Caco-2 (cell line): ENCODE measurements at regions of chr9 and their contacts with region 1.

Region 1: DNA sequence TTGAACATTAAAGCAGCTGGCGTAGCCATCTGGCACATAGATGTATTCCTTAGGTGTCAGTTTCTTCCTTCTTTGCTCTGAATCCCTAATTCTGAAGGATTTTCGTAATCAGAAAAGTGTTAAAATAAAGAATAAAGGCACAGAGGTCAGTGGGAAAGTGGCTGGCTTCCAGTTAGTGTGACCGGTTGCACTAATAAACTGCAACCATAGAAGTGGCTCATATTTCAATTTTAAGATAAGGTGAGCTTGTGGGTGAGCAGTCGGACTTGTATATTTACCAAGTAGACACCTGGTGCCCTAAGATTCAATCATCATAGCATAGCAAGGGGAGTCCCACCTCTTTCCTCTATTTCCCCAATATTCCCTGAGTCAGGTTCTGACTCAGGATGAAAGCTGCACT is 459.6 kb downstream of the ACTL7B start:
- DNase-seq: no peak
- H3K4me3 ChIP-seq: no peak overlapping the region
- H3K4me3 Mint-ChIP-seq: no peak overlapping the region
- H3K27ac Mint-ChIP-seq: no peak overlapping the region
- H3K4me1 ChIP-seq: no peaks in the 10 kb centered on the region
- H3K4me1 Mint-ChIP-seq: no peaks in the 10 kb centered on the region
- H3K27me3 ChIP-seq: no peaks in the 10 kb centered on the region
- H3K27me3 Mint-ChIP-seq: no peaks in the 10 kb centered on the region
- CTCF ChIP-seq: no peak

Region 2: DNA sequence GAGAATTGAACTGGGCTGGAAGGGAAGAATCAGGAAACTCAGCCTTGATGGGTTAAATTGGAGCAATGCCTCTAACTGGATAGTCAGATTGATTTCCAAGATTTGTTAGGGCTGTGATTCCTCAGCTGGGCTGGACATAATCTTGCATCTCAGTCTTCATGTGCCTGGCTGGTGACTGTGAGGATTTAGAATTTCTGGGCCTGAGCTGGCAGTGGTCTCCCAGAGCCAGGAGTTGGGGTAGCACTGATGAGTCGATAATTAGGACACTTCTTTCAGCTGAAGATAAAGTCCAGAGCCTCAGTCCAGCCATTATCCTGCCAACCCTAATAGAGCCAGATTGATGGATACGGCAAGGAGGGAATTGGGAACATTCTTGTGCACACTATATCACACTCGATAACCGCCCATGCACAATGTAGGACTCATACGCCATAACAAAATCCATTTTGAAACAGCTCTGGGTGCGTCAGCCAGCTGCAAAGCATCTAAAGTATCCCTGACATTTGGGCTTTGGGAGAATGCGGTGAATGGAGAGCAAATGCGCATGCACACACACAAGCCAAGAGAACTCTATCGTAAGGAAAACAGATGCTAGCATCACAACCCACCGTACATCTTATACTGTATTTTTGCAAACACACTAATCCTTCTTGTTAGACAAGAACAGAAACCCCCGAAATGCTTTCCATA is 501.5 kb before region 1 on chr9:
- CTCF ChIA-PET with region 1: no interaction called
- POLR2A ChIA-PET with region 1: no interaction called
- intact Hi-C with region 1: no loop called
- DNase-seq: no peak
- H3K4me3 ChIP-seq: no peak overlapping the region
- H3K4me3 Mint-ChIP-seq: no peak overlapping the region
- H3K27ac Mint-ChIP-seq: no peak overlapping the region
- H3K4me1 ChIP-seq: no peaks in the 10 kb centered on the region
- H3K4me1 Mint-ChIP-seq: peaks cover 6% of the 10 kb centered on the region
- H3K27me3 ChIP-seq: no peaks in the 10 kb centered on the region
- H3K27me3 Mint-ChIP-seq: no peaks in the 10 kb centered on the region
- CTCF ChIP-seq: no peak

Region 3: GRCh38 chr9:108333530-108333983 is 62.6 kb before region 1 on chr9:
- CTCF ChIA-PET with region 1: no interaction called
- POLR2A ChIA-PET with region 1: no interaction called
- intact Hi-C with region 1: loop called (anchors 10 kb)
- DNase-seq: no peak
- H3K4me3 ChIP-seq: no peak overlapping the region
- H3K4me3 Mint-ChIP-seq: no peak overlapping the region
- H3K27ac Mint-ChIP-seq: no peak overlapping the region
- H3K4me1 ChIP-seq: peaks cover 8% of the 10 kb centered on the region; the same call in 1 of the 2 replicates
- H3K4me1 Mint-ChIP-seq: no peaks in the 10 kb centered on the region
- H3K27me3 ChIP-seq: no peaks in the 10 kb centered on the region
- H3K27me3 Mint-ChIP-seq: no peaks in the 10 kb centered on the region
- CTCF ChIP-seq: no peak